HepG2 (cell line): ENCODE measurements at regions of chr22 and their contacts with region 1.

Region 1: GRCh38 chr22:31199183-31199582 is 12.9 kb upstream of the LIMK2 start:
- DNase-seq: peak; percentile 50
- ATAC-seq: peak; percentile 86
- H3K4me3 ChIP-seq: no peak overlapping the region
- H3K27ac ChIP-seq: peak overlapping the region; percentile 9
- H3K4me1 ChIP-seq: peaks cover 8% of the 10 kb centered on the region
- H3K27me3 ChIP-seq: no peaks in the 10 kb centered on the region
- CTCF ChIP-seq: peak; percentile 80
- EP300 ChIP-seq: no peak
- POLR2A ChIP-seq: no peak
- RAD21 ChIP-seq: peak; percentile 66; the same call in 1 of the 2 replicates

Region 2: GRCh38 chr22:31005535-31005934 is 193.6 kb before region 1 on chr22:
- CTCF ChIA-PET with region 1: no interaction called
- POLR2A ChIA-PET with region 1: no interaction called
- in situ Hi-C with region 1: no loop called
- intact Hi-C with region 1: no loop called
- DNase-seq: no peak
- ATAC-seq: no peak
- H3K4me3 ChIP-seq: no peak overlapping the region
- H3K27ac ChIP-seq: no peak overlapping the region
- H3K4me1 ChIP-seq: peaks cover 11% of the 10 kb centered on the region
- H3K27me3 ChIP-seq: no peaks in the 10 kb centered on the region
- CTCF ChIP-seq: no peak
- EP300 ChIP-seq: no peak
- POLR2A ChIP-seq: no peak
- RAD21 ChIP-seq: no peak

Region 3: DNA sequence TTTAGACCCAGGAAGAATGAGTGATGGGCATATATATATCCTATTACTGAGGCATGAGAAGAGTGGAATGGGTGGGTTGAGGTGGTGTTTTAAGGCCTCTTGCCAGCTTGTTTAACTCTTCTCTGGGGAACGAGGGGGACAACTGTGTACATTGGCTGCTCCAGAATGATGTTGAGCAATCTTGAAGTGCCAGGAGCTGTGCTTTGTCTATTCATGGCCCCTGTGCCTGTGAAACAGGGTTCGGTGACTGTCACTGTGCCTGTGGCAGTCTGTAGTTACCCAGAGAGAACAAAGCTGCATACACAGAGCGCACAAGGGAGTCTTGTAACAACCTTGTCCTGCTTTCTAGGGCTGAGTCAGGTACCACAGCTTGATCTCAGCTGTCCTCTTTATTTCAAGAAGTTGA is 24.6 kb after region 1 on chr22:
- CTCF ChIA-PET with region 1: no interaction called
- POLR2A ChIA-PET with region 1: no interaction called
- in situ Hi-C with region 1: no loop called
- intact Hi-C with region 1: no loop called
- DNase-seq: peak; percentile 94
- ATAC-seq: peak; percentile 89
- H3K4me3 ChIP-seq: peak overlapping the region in 1 of 3 experiments; percentile 21; a peak in 1 of 6 replicates
- H3K27ac ChIP-seq: peak overlapping the region; percentile 91
- H3K4me1 ChIP-seq: peaks cover 91% of the 10 kb centered on the region
- H3K27me3 ChIP-seq: no peaks in the 10 kb centered on the region
- CTCF ChIP-seq: no peak
- EP300 ChIP-seq: peak in 1 of 2 experiments; percentile 73; a peak in 2 of 4 replicates
- POLR2A ChIP-seq: peak in 1 of 2 experiments; percentile 60; a peak in 1 of 4 replicates
- RAD21 ChIP-seq: 0 out of 2 replicates have a peak, but pooled peaks have one; percentile 9

Region 4: DNA sequence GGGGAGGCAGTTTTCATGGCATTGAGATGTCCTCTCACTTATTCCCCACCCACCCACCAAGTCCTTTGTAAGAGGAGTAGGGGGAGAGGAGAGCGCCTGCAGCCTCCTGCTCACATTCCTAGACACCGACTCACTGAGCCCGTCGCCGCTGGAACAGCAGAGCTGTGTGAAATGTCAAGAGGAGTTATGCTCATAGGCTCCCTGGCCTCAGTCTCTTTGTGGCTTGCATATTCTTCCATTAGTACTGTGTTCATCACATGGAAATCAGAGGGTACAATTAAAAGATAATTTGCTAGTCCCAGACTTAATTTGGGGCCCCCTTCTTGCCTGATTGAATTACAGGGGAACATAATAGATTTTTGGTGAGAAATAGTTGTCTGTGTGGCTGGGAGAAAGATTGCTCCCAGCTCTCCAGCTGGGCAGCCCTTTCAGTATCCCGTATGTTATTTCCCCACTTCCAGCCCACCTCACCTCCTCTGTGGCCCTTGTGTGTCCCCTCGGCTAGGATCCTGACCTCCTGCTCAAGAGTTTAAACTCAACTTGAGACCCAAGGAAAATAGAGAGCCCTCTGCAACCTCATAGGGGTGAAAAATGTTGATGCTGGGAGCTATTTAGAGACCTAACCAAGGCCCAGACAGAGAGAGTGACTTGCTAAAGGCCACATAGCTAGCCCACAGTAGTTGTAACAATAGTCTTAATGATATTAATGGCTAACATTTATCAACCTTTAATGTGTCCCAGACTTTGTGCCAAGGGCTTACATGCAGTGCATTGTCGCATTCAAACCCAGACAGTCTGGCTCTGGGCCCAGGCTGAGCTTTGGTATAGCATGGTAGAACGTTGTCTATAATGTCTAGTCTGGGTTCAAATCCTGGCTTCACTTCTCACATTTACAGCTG is 45.1 kb after region 1 on chr22:
- CTCF ChIA-PET with region 1: no interaction called
- POLR2A ChIA-PET with region 1: no interaction called
- in situ Hi-C with region 1: no loop called
- intact Hi-C with region 1: no loop called
- DNase-seq: peak; percentile 43
- ATAC-seq: no peak
- H3K4me3 ChIP-seq: no peak overlapping the region
- H3K27ac ChIP-seq: no peak overlapping the region
- H3K4me1 ChIP-seq: peaks cover 62% of the 10 kb centered on the region
- H3K27me3 ChIP-seq: no peaks in the 10 kb centered on the region
- CTCF ChIP-seq: no peak
- EP300 ChIP-seq: no peak
- POLR2A ChIP-seq: no peak
- RAD21 ChIP-seq: no peak

Region 5: DNA sequence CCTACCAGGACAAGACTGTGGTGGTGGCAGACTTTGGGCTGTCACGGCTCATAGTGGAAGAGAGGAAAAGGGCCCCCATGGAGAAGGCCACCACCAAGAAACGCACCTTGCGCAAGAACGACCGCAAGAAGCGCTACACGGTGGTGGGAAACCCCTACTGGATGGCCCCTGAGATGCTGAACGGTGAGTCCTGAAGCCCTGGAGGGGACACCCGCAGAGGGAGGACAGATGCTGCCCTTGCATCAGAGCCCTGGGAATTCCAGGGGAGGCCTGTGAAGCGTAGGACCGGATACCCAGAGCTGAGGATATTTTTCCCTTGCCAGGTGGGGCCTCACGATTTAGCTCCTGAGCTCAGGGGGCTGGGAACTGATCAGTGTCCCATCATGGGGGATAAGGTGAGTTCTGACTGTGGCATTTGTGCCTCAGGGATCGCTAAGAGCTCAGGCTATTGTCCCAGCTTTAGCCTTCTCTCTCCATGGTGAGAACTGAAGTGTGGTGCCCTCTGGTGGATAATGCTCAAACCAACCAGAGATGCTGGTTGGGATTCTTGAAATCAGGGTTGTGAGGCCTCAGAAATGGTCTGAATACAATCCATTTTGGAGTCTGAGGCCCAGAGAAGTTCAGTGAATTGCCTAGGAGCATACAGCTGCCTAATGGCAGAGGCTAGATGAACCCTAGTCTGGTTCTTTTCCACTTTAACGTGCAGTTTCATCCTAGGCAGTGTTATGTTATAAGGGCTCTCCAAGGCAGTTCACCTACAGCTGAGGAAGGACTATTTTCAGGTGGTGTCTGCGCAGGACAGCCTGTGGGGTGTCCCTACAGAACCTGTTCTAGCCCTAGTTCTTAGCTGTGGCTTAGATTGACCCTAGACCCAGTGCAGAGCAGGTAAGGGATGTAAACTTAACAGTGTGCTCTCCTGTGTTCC is 73.6 kb after region 1 on chr22:
- CTCF ChIA-PET with region 1: no interaction called
- POLR2A ChIA-PET with region 1: no interaction called
- in situ Hi-C with region 1: no loop called
- intact Hi-C with region 1: loop called (anchors 2 kb)
- DNase-seq: peak; percentile 52
- ATAC-seq: peak; percentile 78
- H3K4me3 ChIP-seq: no peak overlapping the region
- H3K27ac ChIP-seq: no peak overlapping the region
- H3K4me1 ChIP-seq: peaks cover 23% of the 10 kb centered on the region
- H3K27me3 ChIP-seq: no peaks in the 10 kb centered on the region
- CTCF ChIP-seq: peak; percentile 71
- EP300 ChIP-seq: no peak
- POLR2A ChIP-seq: no peak
- RAD21 ChIP-seq: no peak

Region 6: DNA sequence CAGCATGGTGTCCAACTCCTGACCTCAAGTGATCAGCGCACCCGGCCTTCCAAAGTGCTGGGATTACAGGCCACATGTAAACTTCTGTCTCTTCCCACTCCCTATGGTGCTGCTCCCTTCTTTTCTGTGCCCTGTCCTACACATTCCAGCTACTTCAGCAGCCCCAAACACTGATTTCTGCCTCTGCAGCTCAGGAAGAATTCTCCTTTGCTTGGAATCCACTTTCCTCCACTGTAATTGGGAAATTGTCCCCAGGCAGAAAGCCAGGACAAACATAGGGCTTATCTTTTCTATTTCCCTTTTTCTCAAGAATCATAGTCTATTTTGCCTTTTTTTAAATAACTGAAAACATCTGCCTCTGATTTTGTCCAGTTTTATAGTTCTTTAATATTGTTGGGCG is 178.9 kb after region 1 on chr22:
- CTCF ChIA-PET with region 1: no interaction called
- POLR2A ChIA-PET with region 1: no interaction called
- in situ Hi-C with region 1: no loop called
- intact Hi-C with region 1: no loop called
- DNase-seq: no peak
- ATAC-seq: no peak
- H3K4me3 ChIP-seq: no peak overlapping the region
- H3K27ac ChIP-seq: no peak overlapping the region
- H3K4me1 ChIP-seq: no peaks in the 10 kb centered on the region
- H3K27me3 ChIP-seq: no peaks in the 10 kb centered on the region
- CTCF ChIP-seq: no peak
- EP300 ChIP-seq: no peak
- POLR2A ChIP-seq: no peak
- RAD21 ChIP-seq: no peak

Region 7: GRCh38 chr22:33149611-33150010 is 1950.4 kb after region 1 on chr22:
- CTCF ChIA-PET with region 1: no interaction called
- POLR2A ChIA-PET with region 1: no interaction called
- in situ Hi-C with region 1: no loop called
- intact Hi-C with region 1: loop called (anchors 10 kb)
- DNase-seq: no peak
- ATAC-seq: no peak
- H3K4me3 ChIP-seq: no peak overlapping the region
- H3K27ac ChIP-seq: no peak overlapping the region
- H3K4me1 ChIP-seq: no peaks in the 10 kb centered on the region
- H3K27me3 ChIP-seq: peaks cover 0 to 1% of the 10 kb centered on the region in 2 experiments; a peak in 1 of 5 replicates
- CTCF ChIP-seq: no peak
- EP300 ChIP-seq: no peak
- POLR2A ChIP-seq: no peak
- RAD21 ChIP-seq: no peak